ENCODE measurements at regions of chr3 and their contacts with region 1.

Region 1: GRCh38 chr3:53375019-53375418 is 27.7 kb upstream of the DCP1A start:
- DNase-seq: peak; percentile 85
- H3K4me3 Mint-ChIP-seq: no peak overlapping the region
- H3K27ac Mint-ChIP-seq: peak overlapping the region; percentile 68
- H3K4me1 Mint-ChIP-seq: no peaks in the 10 kb centered on the region
- H3K27me3 Mint-ChIP-seq: no peaks in the 10 kb centered on the region
- CTCF ChIP-seq: peak; percentile 81

Region 2: GRCh38 chr3:53513556-53514190 is 138.7 kb after region 1 on chr3:
- CTCF ChIA-PET with region 1: interaction called, 8 read pairs
- intact Hi-C with region 1: loop called (anchors 2 kb)
- DNase-seq: peak; percentile 22
- H3K4me3 Mint-ChIP-seq: no peak overlapping the region
- H3K27ac Mint-ChIP-seq: no peak overlapping the region
- H3K4me1 Mint-ChIP-seq: peaks cover 6% of the 10 kb centered on the region
- H3K27me3 Mint-ChIP-seq: no peaks in the 10 kb centered on the region
- CTCF ChIP-seq: peak; percentile 41